Dorsolateral prefrontal cortex (tissue), 120 donors: ENCODE measurements at regions of chr9 and their contacts with region 1.

Region 1: DNA sequence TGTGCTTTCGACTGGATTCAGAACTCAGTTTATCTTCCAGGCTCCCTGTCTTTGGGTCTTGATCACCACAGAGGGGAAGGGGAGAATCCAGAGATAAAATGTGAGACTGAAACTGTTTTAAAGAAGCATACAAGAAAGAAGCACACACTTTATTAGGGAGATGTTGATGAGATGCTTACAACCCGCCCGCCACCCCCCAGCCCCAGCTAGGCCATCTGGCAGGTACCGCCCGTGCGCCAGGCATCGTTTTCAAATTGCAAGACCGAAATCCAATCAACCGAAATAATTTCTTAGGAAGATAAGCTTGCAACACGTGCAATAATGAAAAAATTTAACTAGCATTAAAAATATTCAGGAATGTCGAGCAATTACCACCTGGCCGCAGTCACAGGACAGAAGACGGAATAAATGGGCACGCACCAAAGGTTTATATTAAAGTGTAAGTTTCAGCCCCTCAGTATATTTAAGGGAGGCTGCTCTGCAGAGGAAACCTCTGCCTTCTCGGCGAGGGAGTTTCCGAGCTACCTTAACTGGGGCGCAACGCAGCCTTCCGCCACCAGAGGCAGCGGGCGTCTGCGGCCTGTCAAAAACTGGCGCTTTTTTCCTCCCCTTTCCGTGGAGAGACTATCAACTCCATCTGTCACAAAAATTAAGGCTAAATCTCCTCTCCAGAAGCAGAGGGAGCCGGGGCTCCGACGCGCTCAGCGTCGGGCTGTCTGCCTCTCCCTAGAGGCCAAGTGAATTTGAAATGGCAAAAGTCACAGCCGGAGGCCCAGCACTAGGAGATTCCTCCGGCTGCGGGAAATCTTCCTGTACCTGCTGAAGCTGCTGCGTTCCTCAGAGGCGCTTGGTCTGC is 996 bp upstream of the GAS1 start:
- DNase-seq: peak; percentile 73 to 89 (median 84)
- H3K4me3 ChIP-seq: peak overlapping the region; percentile 65 to 92 (median 79)
- H3K27ac ChIP-seq: peak overlapping the region; percentile 77 to 99 (median 97)
- H3K27me3 ChIP-seq: no peaks in the 10 kb centered on the region
- CTCF ChIP-seq: peak; percentile 49 to 92 (median 78)

Region 2: GRCh38 chr9:86354011-86354817 is 594.1 kb before region 1 on chr9 and contains the start of gene TUT7:
- intact Hi-C with region 1: loop called in 1 of 2 experiments (anchors 5 kb)
- DNase-seq: peak; percentile 89 to 98 (median 94)
- H3K4me3 ChIP-seq: peak within 1 kb of the TSS; percentile 71 to 100 (median 93)
- H3K27ac ChIP-seq: peak within 1 kb of the TSS; percentile 55 to 98 (median 92)
- H3K27me3 ChIP-seq: no peaks in the 10 kb centered on the region
- CTCF ChIP-seq: peak in 23 of 56 donors; percentile 9 to 51 (median 23)
- total RNA-seq, gene TUT7: 16.3 to 37.4 (median 25.7) TPM

Region 3: DNA sequence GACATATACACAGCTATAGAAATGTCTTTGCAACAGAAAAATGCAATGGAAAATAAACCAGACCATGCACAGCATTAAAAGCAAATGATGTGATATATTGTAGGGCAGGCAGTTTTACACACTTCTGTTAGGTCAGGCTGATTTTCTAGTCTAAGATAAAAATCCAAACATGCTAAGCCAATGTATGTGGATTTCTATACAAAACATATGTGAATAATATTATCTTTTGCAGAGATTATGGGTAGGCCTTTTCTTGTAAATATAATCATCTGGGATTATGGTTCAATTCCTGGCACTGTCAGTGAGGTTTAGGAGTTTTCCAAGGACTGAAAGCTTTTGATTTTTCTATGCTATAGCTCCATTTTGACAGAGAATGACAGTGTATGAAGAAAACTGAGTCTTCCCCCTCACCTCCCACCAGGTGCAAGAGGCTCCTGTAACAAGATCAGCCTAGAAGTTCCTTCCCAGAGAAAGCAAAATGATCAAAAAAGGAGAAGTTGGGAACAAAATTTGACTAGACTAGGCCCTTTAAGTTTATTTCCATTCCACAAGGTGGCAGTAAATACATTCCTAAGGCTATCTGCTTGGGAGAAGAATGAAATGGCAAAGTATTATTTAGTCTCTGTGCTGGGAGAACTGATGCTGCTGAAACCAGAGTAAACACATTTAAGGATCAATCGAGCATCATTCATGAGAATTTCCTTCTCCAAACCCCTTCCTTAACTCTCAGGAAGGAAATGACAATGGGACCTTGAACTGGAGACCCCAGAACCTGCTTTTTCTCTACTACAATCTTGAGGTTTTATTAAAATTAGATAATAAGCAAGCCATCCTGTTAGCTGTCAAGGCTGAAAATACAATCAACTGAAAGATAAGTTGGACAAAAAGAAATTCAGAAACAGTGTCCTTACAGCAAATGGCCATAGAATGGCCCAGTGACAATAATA is 461.1 kb before region 1 on chr9:
- intact Hi-C with region 1: loop called (anchors 5 kb)
- DNase-seq: no peak
- H3K4me3 ChIP-seq: no peak overlapping the region
- H3K27ac ChIP-seq: no peak overlapping the region
- H3K27me3 ChIP-seq: no peaks in the 10 kb centered on the region
- CTCF ChIP-seq: peak; percentile 50 to 91 (median 76)

Region 4: GRCh38 chr9:86749894-86750255 is 198.4 kb before region 1 on chr9:
- intact Hi-C with region 1: loop called in 1 of 2 experiments (anchors 5 kb)
- DNase-seq: no peak
- H3K4me3 ChIP-seq: no peak overlapping the region
- H3K27ac ChIP-seq: no peak overlapping the region
- H3K27me3 ChIP-seq: peaks cover 0 to 2% (median 0%) of the 10 kb centered on the region in 45 donors
- CTCF ChIP-seq: no peak

Region 5: DNA sequence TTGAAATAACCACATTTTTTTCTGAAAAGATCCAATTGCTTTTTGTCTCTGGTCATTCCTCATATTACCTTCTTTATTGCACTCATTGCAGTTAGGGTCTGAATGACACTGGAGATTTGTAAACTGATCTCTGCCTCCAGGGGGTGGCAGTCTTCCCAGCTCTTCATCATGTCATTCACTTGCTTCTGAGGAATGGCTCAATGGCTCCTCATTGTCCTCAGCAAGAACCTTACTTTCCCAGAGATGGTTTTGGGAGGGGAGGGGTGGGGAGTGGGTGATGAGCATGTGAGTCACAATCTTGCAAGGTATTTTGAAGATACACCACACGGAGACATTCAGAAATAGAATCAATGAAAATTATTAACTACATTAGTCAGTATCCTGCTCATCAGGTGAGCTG is 158.8 kb after region 1 on chr9:
- intact Hi-C with region 1: loop called in 1 of 2 experiments (anchors 10 kb)
- DNase-seq: peak in 2 of 10 donors; percentile 14 to 38
- H3K4me3 ChIP-seq: no peak overlapping the region
- H3K27ac ChIP-seq: no peak overlapping the region
- H3K27me3 ChIP-seq: no peaks in the 10 kb centered on the region
- CTCF ChIP-seq: peak in 44 of 56 donors; percentile 11 to 63 (median 34)

Region 6: DNA sequence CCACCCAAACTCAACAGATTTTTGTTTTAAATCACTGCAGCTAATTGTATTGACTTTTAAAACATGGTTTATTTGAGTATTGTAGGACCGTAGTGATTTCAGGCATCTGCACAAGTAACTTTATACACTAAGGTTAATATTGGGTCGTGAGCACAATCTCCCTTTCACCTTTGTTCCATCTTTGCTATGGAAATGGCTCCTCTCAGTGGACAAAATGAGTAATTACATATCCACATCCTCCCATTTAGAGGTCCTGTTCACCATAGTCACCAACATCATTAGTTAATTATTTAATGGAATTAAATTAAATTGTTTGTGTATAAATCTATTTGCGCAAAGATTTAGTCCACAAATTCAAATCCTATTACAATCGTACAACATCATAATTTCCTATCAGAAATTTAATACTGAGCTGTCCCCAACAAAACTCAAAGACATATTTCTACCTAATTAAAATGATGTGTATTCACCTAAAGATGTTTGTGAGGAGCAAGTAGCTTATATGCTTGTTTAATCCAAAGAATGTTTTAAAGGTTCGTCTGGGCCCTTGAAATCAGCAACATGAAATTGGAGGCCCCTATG is 376.4 kb after region 1 on chr9:
- intact Hi-C with region 1: loop called (anchors 5 to 10 kb)
- DNase-seq: no peak
- H3K4me3 ChIP-seq: no peak overlapping the region
- H3K27ac ChIP-seq: no peak overlapping the region
- H3K27me3 ChIP-seq: no peaks in the 10 kb centered on the region
- CTCF ChIP-seq: peak; percentile 76 to 97 (median 89)